ENCODE measurements at regions of chr4 and their contacts with region 1.

Region 1: GRCh38 chr4:93416344-93417128 is 412.0 kb upstream of the ATOH1 start:
- DNase-seq: no peak
- H3K4me3 ChIP-seq: no peak overlapping the region
- H3K27ac ChIP-seq: no peak overlapping the region
- H3K4me1 ChIP-seq: no peaks in the 10 kb centered on the region
- H3K27me3 ChIP-seq: no peaks in the 10 kb centered on the region
- CTCF ChIP-seq: no peak
- EP300 ChIP-seq: no peak
- POLR2A ChIP-seq: no peak

Region 2: GRCh38 chr4:93313197-93313596 is 103.3 kb before region 1 on chr4:
- in situ Hi-C with region 1: loop called in 1 of 4 experiments (anchors 25 kb)
- intact Hi-C with region 1: no loop called
- DNase-seq: no peak
- H3K4me3 ChIP-seq: no peak overlapping the region
- H3K27ac ChIP-seq: no peak overlapping the region
- H3K4me1 ChIP-seq: no peaks in the 10 kb centered on the region
- H3K27me3 ChIP-seq: no peaks in the 10 kb centered on the region
- CTCF ChIP-seq: no peak
- EP300 ChIP-seq: no peak
- POLR2A ChIP-seq: no peak

Region 3: DNA sequence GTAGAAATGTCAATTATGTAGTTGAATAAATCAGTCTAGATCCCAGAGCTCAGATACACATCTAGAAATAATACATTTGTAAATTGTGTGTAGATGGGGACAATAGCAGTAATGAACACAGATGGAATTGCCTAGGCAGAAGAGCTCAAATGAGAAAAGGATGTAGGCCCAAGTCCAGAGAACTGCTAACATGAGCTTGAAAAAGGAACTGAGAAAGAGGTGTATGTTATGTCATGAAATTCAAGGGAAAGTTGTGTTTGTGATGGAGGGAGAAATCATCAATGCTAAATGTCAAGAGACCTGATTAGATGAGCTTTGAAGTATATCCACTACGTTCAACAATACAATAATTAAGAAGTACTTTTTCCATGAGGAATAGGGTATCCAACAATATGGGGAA is 35.4 kb after region 1 on chr4:
- in situ Hi-C with region 1: no loop called
- intact Hi-C with region 1: loop called (anchors 5 kb)
- DNase-seq: no peak
- H3K4me3 ChIP-seq: no peak overlapping the region
- H3K27ac ChIP-seq: no peak overlapping the region
- H3K4me1 ChIP-seq: no peaks in the 10 kb centered on the region
- H3K27me3 ChIP-seq: no peaks in the 10 kb centered on the region
- CTCF ChIP-seq: no peak
- EP300 ChIP-seq: no peak
- POLR2A ChIP-seq: no peak